K562 (cell line): ENCODE measurements at regions of chr11 and their contacts with region 1.

Region 1: GRCh38 chr11:65471410-65471762 is 27.5 kb upstream of the MALAT1 start:
- DNase-seq: peak; percentile 63 to 91 (median 77)
- ATAC-seq: peak; percentile 88
- H3K4me3 ChIP-seq: peak overlapping the region; percentile 42
- H3K27ac ChIP-seq: peak overlapping the region; percentile 96
- H3K4me1 ChIP-seq: peaks cover 38 to 55% of the 10 kb centered on the region in 2 experiments
- H3K27me3 ChIP-seq: no peaks in the 10 kb centered on the region
- CTCF ChIP-seq: peak; percentile 81 to 94 (median 94)
- EP300 ChIP-seq: no peak
- POLR2A ChIP-seq: no peak
- RAD21 ChIP-seq: peak; percentile 76 to 91

Region 2: GRCh38 chr11:65382033-65382807 is 89.2 kb before region 1 on chr11 and contains the start of gene SLC25A45:
- CTCF ChIA-PET with region 1: interaction called, 5 read pairs
- POLR2A ChIA-PET with region 1: interaction called, 8 read pairs
- in situ Hi-C with region 1: no loop called
- intact Hi-C with region 1: loop called (anchors 2 kb)
- DNase-seq: peak; percentile 86 to 96 (median 90)
- ATAC-seq: peak; percentile 93
- H3K4me3 ChIP-seq: peak within 1 kb of the TSS; percentile 37
- H3K27ac ChIP-seq: peak within 1 kb of the TSS; percentile 93
- H3K4me1 ChIP-seq: peaks cover 35 to 81% of the 10 kb centered on the region in 2 experiments
- H3K27me3 ChIP-seq: no peaks in the 10 kb centered on the region
- CTCF ChIP-seq: peak; percentile 84 to 92 (median 91)
- EP300 ChIP-seq: peak; percentile 85
- POLR2A ChIP-seq: peak; percentile 73
- RAD21 ChIP-seq: peak; percentile 93 to 95
- polyA plus RNA-seq, gene SLC25A45: 0.15 to 0.34 TPM

Region 3: DNA sequence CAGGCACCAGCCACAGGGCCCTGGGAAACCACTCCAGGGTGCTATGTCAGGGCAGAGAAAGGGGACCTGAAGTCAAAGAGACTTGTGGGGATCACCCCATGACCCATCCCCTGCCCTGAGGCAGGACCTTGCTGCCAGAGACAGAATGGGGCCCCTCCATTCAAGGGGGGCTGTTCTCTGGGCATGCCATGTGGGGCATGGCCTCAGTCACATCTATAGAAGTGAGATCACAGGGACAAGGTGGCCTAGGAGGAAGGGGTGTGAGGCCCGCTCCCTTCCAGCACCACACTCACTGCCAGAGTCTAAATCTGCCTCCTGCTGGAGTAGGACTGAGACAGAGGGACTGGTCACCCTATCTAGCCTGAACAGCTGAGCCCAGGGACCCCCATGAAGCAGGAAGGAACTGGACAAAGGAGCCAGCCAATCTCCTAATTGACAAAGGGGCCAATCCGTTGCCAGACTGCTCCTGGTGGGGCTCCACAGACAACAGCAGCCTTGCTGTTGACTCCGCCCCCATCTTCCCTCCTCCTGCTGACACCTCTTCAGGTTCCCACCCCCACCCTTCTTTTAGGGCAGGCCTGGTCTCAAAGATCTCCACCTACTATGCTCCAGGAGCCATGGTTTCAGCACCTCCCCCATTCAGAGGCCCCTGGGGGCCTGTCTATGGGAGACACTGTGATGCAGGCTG is 22.8 kb before region 1 on chr11:
- CTCF ChIA-PET with region 1: interaction called, 4 read pairs
- POLR2A ChIA-PET with region 1: interaction called, 12 read pairs
- in situ Hi-C with region 1: no loop called
- intact Hi-C with region 1: no loop called
- DNase-seq: peak; percentile 73 to 90 (median 78)
- ATAC-seq: peak; percentile 82
- H3K4me3 ChIP-seq: no peak overlapping the region
- H3K27ac ChIP-seq: peak overlapping the region; percentile 64
- H3K4me1 ChIP-seq: peaks cover 17 to 46% of the 10 kb centered on the region in 2 experiments; a peak in 4 of 5 replicates
- H3K27me3 ChIP-seq: no peaks in the 10 kb centered on the region
- CTCF ChIP-seq: no peak
- EP300 ChIP-seq: no peak
- POLR2A ChIP-seq: 0 out of 2 replicates have a peak, but pooled peaks have one; percentile 25
- RAD21 ChIP-seq: no peak

Region 4: GRCh38 chr11:65454696-65455456 is 16.5 kb before region 1 on chr11:
- CTCF ChIA-PET with region 1: no interaction called
- POLR2A ChIA-PET with region 1: interaction called, 29 read pairs
- in situ Hi-C with region 1: no loop called
- intact Hi-C with region 1: no loop called
- DNase-seq: peak; percentile 97 to 99 (median 98)
- ATAC-seq: peak; percentile 88
- H3K4me3 ChIP-seq: peak overlapping the region; percentile 70
- H3K27ac ChIP-seq: peak overlapping the region; percentile 87
- H3K4me1 ChIP-seq: peaks cover 21 to 38% of the 10 kb centered on the region in 2 experiments; a peak in 4 of 5 replicates
- H3K27me3 ChIP-seq: no peaks in the 10 kb centered on the region
- CTCF ChIP-seq: peak; percentile 35 to 55 (median 50); a peak in 5 of 6 replicates
- EP300 ChIP-seq: no peak
- POLR2A ChIP-seq: peak; percentile 98
- RAD21 ChIP-seq: no peak